ENCODE measurements at regions of chr12 and their contacts with region 1.

Region 1: DNA sequence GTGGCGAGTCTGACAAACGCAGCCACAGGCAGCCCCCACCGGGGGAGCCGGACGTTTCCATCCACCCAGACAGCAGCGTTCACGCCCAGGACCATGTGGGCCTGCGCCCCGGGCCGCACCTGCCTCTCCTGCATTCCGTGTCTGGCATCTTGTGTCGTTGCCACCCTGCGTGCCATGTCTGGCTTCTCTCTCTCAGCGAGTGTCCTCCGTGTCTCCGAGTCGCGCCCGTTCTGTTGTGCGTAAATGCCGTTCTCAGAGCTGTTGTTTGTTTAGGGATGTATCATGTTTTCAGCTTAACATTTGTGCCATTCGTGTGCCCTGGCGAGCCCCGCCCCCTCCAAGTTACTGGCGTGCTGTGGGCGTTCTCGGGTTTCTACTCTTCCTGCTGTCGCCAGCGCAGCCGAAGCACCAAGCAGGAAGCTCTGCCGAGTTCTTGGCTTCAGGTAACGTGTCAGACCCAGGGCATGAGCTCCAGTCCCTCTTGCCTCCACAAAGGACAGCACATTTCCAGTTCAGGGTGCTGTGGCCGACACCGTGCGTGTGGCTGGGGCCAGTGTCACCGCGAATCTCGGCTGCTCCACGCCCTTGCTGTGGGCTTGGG is 34.6 kb downstream of the NOC4L start:
- DNase-seq: no peak
- ATAC-seq: peak; percentile 33 to 52
- H3K4me3 ChIP-seq: peak overlapping the region in 3 of 4 donors; percentile 12 to 27 (median 24)
- H3K27ac ChIP-seq: peak overlapping the region in 2 of 4 donors; percentile 23 to 72
- H3K4me1 ChIP-seq: peaks cover 5 to 7% of the 10 kb centered on the region in 2 donors
- H3K27me3 ChIP-seq: peaks cover 15 to 24% (median 22%) of the 10 kb centered on the region in 3 donors
- CTCF ChIP-seq: no peak
- POLR2A ChIP-seq: no peak

Region 2: GRCh38 chr12:132189378-132190011 is 10.6 kb after region 1 on chr12:
- in situ Hi-C with region 1: no loop called
- intact Hi-C with region 1: loop called (anchors 1 kb)
- DNase-seq: peak; percentile 51 to 62
- ATAC-seq: peak; percentile 66 to 69
- H3K4me3 ChIP-seq: peak overlapping the region; percentile 56 to 65 (median 64)
- H3K27ac ChIP-seq: peak overlapping the region; percentile 31 to 77 (median 58)
- H3K4me1 ChIP-seq: peaks cover 0 to 7% of the 10 kb centered on the region in 2 donors
- H3K27me3 ChIP-seq: peaks cover 0 to 56% (median 44%) of the 10 kb centered on the region in 3 donors
- CTCF ChIP-seq: no peak
- POLR2A ChIP-seq: peak; percentile 33 to 67

Region 3: GRCh38 chr12:132284071-132284826 is 105.3 kb after region 1 on chr12:
- in situ Hi-C with region 1: no loop called
- intact Hi-C with region 1: no loop called
- DNase-seq: no peak
- ATAC-seq: no peak
- H3K4me3 ChIP-seq: no peak overlapping the region
- H3K27ac ChIP-seq: no peak overlapping the region
- H3K4me1 ChIP-seq: no peaks in the 10 kb centered on the region
- H3K27me3 ChIP-seq: peaks cover 69 to 92% (median 77%) of the 10 kb centered on the region in 3 donors
- CTCF ChIP-seq: no peak
- POLR2A ChIP-seq: no peak

Measured in gastrocnemius medialis (tissue), 4 donors.